ENCODE measurements at regions of chr20 and their contacts with region 1.

Region 1: DNA sequence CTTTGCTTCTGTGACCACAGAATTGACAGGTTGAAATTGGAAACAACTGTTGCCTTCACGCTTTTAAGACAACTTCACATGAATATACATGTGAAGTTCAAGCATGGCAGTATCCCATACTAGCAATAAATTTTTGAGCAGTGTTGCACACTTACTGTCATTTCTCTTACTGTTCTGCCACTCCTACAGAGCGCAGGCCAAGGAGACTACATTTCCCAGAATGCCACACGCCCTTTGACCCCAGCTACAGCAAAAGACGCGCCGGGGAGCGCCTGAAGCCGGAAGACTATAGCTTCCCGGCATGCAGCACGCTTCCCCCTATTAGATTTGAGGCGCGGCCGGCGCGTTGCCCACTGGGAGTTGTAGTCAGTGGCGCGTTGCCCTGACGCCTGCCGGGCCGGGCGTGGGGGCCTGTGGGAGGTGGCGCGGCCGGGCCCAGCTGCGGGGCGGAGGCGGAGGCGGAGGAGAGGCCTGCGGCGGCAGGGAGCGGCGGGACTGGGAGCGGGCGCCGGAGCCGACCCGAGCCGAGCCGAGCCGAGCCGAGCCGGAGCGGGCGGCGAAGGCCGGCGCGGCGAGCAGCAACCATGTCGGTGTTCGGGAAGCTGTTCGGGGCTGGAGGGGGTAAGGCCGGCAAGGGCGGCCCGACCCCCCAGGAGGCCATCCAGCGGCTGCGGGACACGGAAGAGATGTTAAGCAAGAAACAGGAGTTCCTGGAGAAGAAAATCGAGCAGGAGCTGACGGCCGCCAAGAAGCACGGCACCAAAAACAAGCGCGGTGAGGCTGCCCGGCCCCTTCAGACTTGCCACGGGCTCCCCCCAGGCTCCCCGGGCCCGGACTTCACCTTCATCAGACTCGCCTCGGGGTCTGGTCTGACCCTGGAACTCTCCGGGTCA is at the start of gene CHMP4B:
- DNase-seq: peak; percentile 96 to 98
- ATAC-seq: peak; percentile 93 to 99 (median 98)
- H3K4me3 ChIP-seq: peak within 1 kb of the TSS; percentile 89
- H3K4me3 Mint-ChIP-seq: peak within 1 kb of the TSS; percentile 92
- H3K27ac ChIP-seq: peak within 1 kb of the TSS; percentile 54
- H3K27ac Mint-ChIP-seq: peak within 1 kb of the TSS; percentile 93 to 98
- H3K4me1 ChIP-seq: peaks cover 30% of the 10 kb centered on the region
- H3K4me1 Mint-ChIP-seq: peaks cover 36 to 38% of the 10 kb centered on the region in 2 donors
- H3K27me3 ChIP-seq: no peaks in the 10 kb centered on the region
- H3K27me3 Mint-ChIP-seq: no peaks in the 10 kb centered on the region
- CTCF ChIP-seq: no peak
- total RNA-seq, gene CHMP4B: 63.7 to 74.0 (median 70.0) TPM

Region 2: DNA sequence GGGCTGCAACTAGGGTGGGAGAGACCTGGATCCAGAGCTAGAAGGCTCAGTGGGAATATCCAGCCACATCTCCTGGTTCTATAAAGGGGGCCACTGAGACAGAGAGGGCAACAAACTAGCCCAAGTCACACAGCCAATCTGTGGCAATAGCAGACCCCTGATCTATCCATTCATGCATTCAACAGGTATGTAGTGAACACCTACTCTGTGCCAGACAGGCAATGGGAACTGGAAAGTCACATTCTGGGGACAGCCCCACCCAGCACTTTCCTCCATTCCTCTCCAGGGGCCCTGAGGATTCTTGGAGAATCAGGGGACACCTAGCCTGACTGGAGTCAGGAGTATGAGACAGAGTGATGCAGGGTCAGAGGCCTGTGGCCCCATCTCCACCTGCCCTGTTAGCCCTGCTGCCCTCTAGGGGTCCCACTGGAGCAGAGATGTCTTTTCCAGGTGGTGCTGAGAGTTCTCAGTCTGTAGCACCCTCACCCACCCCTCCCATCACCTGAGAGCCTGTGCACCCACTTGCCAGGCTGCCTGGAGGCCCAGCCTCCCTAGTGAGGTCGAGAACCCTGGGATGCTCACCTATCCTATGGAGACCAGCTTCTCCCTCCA is 629.5 kb before region 1 on chr20:
- intact Hi-C with region 1: no loop called
- DNase-seq: no peak
- ATAC-seq: no peak
- H3K4me3 ChIP-seq: no peak overlapping the region
- H3K4me3 Mint-ChIP-seq: no peak overlapping the region
- H3K27ac ChIP-seq: no peak overlapping the region
- H3K27ac Mint-ChIP-seq: no peak overlapping the region
- H3K4me1 ChIP-seq: no peaks in the 10 kb centered on the region
- H3K4me1 Mint-ChIP-seq: no peaks in the 10 kb centered on the region
- H3K27me3 ChIP-seq: no peaks in the 10 kb centered on the region
- H3K27me3 Mint-ChIP-seq: peaks cover 0 to 3% of the 10 kb centered on the region in 2 donors
- CTCF ChIP-seq: no peak

Region 3: GRCh38 chr20:34037121-34037520 is 226.0 kb after region 1 on chr20:
- intact Hi-C with region 1: no loop called
- DNase-seq: peak; percentile 24 to 63
- ATAC-seq: peak; percentile 78 to 90 (median 89)
- H3K4me3 ChIP-seq: no peak overlapping the region
- H3K4me3 Mint-ChIP-seq: peak overlapping the region; percentile 22
- H3K27ac ChIP-seq: no peak overlapping the region
- H3K27ac Mint-ChIP-seq: peak overlapping the region; percentile 4 to 86
- H3K4me1 ChIP-seq: peaks cover 16% of the 10 kb centered on the region
- H3K4me1 Mint-ChIP-seq: peaks cover 82 to 90% of the 10 kb centered on the region in 2 donors
- H3K27me3 ChIP-seq: no peaks in the 10 kb centered on the region
- H3K27me3 Mint-ChIP-seq: no peaks in the 10 kb centered on the region
- CTCF ChIP-seq: no peak

Region 4: DNA sequence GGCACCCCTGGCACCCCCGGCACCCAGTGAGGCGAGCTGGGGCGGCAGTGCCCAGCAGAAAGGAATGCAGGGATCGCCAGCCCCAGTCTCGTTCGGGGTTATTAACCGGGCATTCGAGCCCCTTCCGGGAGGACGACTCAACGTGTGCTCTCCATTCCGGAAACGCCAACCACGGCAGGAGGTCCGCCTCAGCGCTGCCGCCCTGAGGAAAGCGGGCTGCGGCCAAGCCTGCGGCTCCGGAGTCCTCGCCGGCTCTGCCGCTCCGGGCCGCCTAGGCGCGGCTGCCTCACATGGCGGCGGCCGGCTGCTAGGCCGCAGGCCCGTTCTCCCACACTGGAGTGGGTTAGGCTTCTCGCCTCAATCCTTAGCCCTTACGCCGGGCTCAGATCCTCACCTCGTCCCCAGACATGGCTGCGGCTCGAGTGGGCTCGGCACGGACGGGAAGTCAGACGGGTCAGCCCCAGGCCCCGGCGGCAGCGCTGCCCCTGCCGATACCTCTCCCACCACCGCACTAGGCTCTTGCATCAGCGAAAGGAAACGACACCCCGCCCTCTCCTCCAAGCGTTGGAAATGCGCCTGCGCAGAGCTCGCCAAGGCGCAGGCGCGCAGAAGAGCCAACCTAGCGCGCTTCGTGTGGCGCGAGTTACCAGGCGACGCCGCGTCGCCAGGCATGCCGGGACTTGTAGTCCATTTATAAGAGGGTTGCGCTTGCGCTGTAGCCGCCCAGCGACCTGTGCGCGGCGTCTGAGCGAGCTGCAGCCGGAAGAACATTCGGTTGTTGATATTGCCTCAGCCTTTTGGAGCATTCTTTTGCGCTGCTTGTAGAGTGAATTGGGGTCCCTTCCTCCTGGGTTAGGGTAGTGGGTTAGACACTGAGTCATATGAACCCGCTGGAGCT is 300.8 kb after region 1 on chr20 and contains the start of gene EIF2S2:
- intact Hi-C with region 1: loop called (anchors 1 kb)
- DNase-seq: peak; percentile 91 to 100
- ATAC-seq: peak; percentile 85 to 95 (median 88)
- H3K4me3 ChIP-seq: peak within 1 kb of the TSS; percentile 98
- H3K4me3 Mint-ChIP-seq: peak within 1 kb of the TSS; percentile 93
- H3K27ac ChIP-seq: peak within 1 kb of the TSS; percentile 95
- H3K27ac Mint-ChIP-seq: peak within 1 kb of the TSS; percentile 95 to 99
- H3K4me1 ChIP-seq: peaks cover 26% of the 10 kb centered on the region
- H3K4me1 Mint-ChIP-seq: peaks cover 51 to 52% of the 10 kb centered on the region in 2 donors
- H3K27me3 ChIP-seq: no peaks in the 10 kb centered on the region
- H3K27me3 Mint-ChIP-seq: no peaks in the 10 kb centered on the region
- CTCF ChIP-seq: no peak
- total RNA-seq, gene EIF2S2: 17.6 to 20.0 (median 17.6) TPM

Measured in natural killer cell (primary cell).